Testis (tissue), 5 donors: ENCODE measurements at regions of chr12 and their contacts with region 1.

Region 1: GRCh38 chr12:92505254-92506231 is 197.2 kb upstream of the PLEKHG7 start:
- DNase-seq: peak; percentile 81
- H3K4me3 ChIP-seq: no peak overlapping the region
- H3K27ac ChIP-seq: peak overlapping the region; percentile 22 to 64
- H3K4me1 ChIP-seq: peaks cover 29% of the 10 kb centered on the region
- H3K27me3 ChIP-seq: no peaks in the 10 kb centered on the region
- CTCF ChIP-seq: no peak
- POLR2A ChIP-seq: no peak

Region 2: DNA sequence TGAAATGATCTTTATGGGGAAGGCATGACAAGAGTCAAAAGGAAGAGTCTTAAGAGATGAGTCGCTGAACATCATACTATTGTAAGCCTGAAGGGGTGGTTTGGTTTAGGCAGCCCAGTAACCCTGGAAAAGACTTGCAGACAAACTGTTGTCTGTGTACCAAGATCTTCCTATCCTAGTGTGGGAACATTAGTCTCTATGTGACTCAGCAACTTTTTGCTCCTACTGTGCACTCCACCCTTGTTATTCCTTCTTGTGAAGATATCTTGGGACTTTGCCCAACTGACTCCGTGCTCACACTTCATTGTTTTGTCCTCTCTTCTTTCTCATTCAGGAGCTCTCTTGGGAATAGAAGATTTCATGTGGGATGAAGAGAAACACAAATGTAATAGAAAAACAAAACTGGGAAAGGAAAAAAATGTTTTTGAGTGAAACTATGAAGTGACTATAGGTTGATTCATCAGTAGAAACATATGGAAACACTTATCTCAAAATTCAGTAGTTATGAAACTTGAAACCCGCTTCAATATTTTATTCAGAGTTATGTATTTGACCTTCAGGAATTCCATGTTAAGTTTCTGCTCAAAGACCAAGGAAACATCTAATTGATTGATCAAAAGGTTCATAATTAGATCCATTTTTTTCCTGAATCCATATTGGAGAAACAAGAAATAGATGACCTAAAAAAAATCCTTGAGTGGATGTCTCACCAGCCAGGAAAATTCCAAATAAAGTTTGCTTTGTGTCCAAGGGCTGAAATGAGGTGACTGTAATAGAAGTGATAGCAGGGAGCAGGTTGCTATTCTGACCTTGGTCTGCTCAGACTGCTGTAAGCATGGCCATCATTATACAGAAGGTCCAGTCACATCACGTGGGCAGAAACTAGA is 427.1 kb before region 1 on chr12:
- intact Hi-C with region 1: no loop called
- DNase-seq: peak; percentile 41
- H3K4me3 ChIP-seq: no peak overlapping the region
- H3K27ac ChIP-seq: peak overlapping the region in 1 of 2 donors; percentile 11
- H3K4me1 ChIP-seq: peaks cover 5% of the 10 kb centered on the region
- H3K27me3 ChIP-seq: no peaks in the 10 kb centered on the region
- CTCF ChIP-seq: no peak
- POLR2A ChIP-seq: no peak

Region 3: DNA sequence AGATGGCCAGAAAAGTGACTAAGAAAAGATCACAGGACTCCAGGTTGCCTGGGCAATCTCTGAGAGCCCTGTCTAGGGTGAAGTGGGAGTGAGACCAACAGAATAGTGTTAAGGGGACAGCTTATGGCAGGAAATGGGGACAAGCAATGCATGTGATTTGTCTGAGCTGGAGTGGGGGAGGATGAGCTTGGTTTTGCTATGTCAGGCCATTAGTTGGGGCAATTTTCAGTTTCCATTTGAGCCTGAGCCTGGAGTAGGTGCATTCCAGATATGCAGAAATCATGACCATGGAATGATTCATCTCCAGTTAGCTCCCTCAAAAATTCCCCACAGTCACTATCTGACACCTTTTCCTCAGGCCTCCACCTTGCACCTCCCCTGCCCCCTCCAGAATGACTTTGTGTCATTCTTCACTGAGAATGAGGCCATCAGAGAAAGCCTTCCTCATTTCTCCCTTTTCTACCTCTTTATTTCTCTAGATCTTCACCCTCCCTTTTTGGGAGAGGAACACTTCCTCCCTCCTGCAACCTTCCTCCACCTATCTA is 46.4 kb after region 1 on chr12:
- intact Hi-C with region 1: loop called (anchors 10 kb)
- DNase-seq: no peak
- H3K4me3 ChIP-seq: no peak overlapping the region
- H3K27ac ChIP-seq: no peak overlapping the region
- H3K4me1 ChIP-seq: peaks cover 21% of the 10 kb centered on the region
- H3K27me3 ChIP-seq: no peaks in the 10 kb centered on the region
- CTCF ChIP-seq: no peak
- POLR2A ChIP-seq: no peak

Region 4: GRCh38 chr12:92570056-92570753 is 64.7 kb after region 1 on chr12:
- intact Hi-C with region 1: no loop called
- DNase-seq: peak; percentile 86
- H3K4me3 ChIP-seq: no peak overlapping the region
- H3K27ac ChIP-seq: no peak overlapping the region
- H3K4me1 ChIP-seq: no peaks in the 10 kb centered on the region
- H3K27me3 ChIP-seq: no peaks in the 10 kb centered on the region
- CTCF ChIP-seq: peak; percentile 74 to 90 (median 83)
- POLR2A ChIP-seq: no peak